ENCODE measurements at regions of chr1 and their contacts with region 1.

Region 1: DNA sequence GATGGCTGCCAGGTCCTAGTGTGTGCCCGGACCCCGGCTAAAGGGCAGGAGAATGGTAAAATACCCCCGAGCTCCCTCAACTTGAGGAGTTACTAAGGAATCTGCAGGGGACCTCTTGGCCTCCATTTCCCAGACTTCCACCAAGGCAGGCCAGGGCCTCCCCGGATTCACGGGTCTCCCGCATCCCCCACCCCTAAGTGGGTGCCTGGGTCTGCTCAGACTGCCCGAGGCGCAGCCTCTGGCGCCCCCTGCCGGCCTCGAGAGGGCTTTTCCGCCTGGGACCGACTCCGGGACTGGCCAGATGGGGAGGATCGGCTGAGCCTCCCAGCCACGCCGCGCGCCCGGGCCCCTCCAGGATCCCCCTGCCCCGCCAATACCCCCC is 1.7 kb downstream of the PLEKHG5 start:
- DNase-seq: peak; percentile 80
- H3K4me3 Mint-ChIP-seq: peak overlapping the region; percentile 75
- H3K27ac Mint-ChIP-seq: peak overlapping the region; percentile 87
- H3K4me1 Mint-ChIP-seq: peaks cover 22% of the 10 kb centered on the region
- H3K27me3 Mint-ChIP-seq: peaks cover 11% of the 10 kb centered on the region

Region 2: DNA sequence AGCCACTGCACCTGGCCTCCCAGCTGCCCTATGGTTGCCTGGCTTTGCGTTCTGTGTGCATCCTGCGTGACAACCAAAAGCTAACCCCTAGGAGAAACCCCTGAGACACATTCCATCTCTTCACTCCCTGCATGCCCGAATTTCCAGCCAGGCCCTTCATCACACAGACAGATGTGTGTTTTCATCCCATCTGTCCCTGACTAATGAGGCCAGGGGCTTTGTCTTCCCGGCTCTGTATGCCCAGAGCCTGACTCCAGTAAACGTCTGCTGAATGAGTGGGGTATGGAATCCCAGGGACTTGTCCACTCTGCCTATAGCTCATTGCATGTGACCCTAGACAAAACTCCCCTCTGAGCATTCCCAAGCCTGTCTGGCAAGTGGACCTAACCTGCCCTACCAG is 55.6 kb before region 1 on chr1:
- CTCF ChIA-PET with region 1: no interaction called
- POLR2A ChIA-PET with region 1: no interaction called
- DNase-seq: no peak
- H3K4me3 Mint-ChIP-seq: no peak overlapping the region
- H3K27ac Mint-ChIP-seq: no peak overlapping the region
- H3K4me1 Mint-ChIP-seq: peaks cover under 1% of the 10 kb centered on the region
- H3K27me3 Mint-ChIP-seq: peaks cover 24% of the 10 kb centered on the region

Region 3: DNA sequence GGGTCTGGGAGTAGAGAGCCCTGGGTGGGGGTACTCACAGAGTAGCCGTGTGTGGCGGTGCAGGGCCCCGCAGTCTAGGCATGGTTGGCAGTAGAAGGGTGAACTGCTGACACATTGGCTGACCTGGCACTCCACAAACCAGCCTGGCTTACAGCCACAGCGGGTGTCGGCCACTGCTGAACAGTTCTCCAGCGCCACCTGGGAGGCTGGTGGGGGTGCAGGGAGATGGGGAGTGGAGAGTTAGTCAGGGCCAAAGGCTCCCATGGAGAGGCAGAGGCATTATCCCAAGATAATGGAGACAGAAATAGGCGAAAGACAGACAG is 25.3 kb before region 1 on chr1:
- CTCF ChIA-PET with region 1: interaction called, 3 read pairs
- POLR2A ChIA-PET with region 1: interaction called, 13 read pairs
- DNase-seq: peak; percentile 42
- H3K4me3 Mint-ChIP-seq: peak overlapping the region; percentile 79
- H3K27ac Mint-ChIP-seq: peak overlapping the region; percentile 71
- H3K4me1 Mint-ChIP-seq: peaks cover 61% of the 10 kb centered on the region
- H3K27me3 Mint-ChIP-seq: no peaks in the 10 kb centered on the region

Region 4: DNA sequence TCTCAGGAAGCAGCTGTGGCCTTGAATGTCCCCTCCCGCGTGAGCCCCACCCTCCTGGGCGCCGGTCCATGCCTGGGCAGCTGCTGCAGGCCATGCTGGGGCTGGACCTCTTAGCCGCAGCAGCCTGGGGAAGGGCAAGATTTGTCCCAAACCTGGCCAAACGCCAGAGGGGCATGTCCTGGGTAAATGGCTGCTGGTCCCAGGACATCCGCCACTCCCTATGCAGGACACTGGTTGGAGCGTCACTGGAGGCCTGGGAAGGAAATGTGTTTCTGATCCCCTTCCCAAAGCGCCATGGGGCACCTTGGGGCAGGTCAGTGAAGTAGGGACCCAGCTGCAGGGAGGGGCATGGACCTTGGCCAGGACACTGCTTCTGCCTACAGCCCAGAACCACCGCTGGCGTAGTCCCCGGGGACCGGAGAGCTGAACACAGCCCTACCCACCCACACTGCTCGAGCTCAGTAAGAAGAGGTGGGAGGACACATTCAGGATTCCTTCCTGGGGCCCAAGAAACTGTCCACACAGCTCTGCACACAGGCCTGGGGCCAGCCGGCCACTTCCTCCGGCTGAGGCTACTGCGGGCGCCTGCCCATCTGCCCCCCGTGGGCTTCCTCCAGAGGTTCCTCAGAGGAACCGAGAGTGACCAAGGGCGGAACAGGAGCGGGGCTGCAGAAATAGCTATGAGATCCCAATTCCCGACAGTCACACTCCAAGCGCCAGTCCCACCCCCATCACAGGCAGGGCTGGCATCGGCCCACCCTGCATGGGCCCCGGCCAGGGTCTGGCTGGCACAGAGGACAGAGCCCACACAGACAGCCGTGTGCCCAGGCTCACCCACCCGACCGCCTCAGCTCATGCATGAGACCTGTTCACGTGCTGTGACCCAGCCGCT is 12.5 kb after region 1 on chr1:
- CTCF ChIA-PET with region 1: interaction called, 33 read pairs
- POLR2A ChIA-PET with region 1: no interaction called
- DNase-seq: no peak
- H3K4me3 Mint-ChIP-seq: no peak overlapping the region
- H3K27ac Mint-ChIP-seq: no peak overlapping the region
- H3K4me1 Mint-ChIP-seq: peaks cover 8% of the 10 kb centered on the region
- H3K27me3 Mint-ChIP-seq: peaks cover 12% of the 10 kb centered on the region

Region 5: GRCh38 chr1:6646499-6647148 is 156.8 kb after region 1 on chr1:
- CTCF ChIA-PET with region 1: interaction called, 10 read pairs
- POLR2A ChIA-PET with region 1: no interaction called
- DNase-seq: peak; percentile 51
- H3K4me3 Mint-ChIP-seq: no peak overlapping the region
- H3K27ac Mint-ChIP-seq: no peak overlapping the region
- H3K4me1 Mint-ChIP-seq: no peaks in the 10 kb centered on the region
- H3K27me3 Mint-ChIP-seq: no peaks in the 10 kb centered on the region